ENCODE measurements at regions of chr16 and their contacts with region 1.

Region 1: DNA sequence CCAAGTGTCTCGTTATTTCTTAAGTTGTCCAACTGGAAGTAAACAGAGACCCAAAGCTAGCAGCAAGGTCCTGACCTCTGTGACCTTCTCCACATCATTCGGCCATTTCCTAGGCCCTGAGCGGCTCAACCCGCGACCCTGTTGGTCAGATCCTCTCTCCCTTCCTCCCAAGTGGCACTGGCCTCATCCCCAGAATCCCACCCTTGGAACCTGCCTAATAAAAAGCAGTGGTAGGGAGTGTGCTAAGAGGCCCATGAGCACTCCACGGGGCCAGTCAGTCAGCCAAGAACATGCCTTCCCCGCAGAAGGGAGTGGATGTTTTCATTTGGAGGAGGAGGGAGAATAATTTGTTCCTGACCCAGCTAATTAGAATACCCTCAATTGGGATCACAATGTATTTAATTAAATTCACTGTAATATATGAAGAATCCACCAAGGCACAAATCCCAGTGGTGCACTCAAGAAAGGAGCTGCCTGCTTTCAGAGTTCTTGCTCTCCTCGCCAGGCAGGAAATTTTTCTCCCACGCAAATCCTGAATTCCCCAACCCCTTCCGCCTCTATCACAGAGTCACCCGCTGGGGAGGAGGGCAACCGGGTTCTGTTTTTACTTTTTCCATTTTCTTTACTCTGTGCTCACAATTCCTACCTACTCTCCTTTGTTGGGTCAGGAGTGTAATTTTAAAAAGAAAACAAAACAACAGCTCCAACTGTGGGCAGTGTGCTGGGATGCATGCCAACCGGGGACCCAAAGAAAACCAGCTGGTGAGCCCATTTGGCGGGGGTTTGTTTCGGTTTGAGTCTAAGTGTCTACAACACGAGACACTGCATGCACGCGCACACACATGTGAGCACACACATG is 153.4 kb downstream of the ZFHX3 start:
- DNase-seq: peak; percentile 59
- ATAC-seq: peak; percentile 43

Region 2: DNA sequence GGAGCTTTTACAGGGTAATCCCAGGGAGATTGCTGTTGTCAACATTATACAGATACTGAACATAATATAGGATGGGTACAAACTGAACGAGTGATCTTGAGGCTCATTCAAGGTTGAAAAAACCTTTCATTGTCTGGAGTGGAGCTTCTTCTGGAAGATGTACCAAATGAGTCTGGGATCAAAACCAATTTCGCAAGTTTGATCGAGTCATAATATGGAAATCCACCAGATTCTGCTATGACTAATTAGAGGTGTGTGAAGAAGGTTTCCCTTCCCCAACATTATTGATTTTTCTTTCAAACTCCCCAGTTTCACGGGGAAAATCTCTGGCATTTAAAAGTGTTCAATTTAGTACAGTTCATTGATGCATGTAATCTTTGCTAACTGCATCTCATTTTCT is 170.7 kb before region 1 on chr16:
- intact Hi-C with region 1: no loop called
- DNase-seq: no peak
- ATAC-seq: no peak

Region 3: GRCh38 chr16:72787514-72788268 is 106.8 kb before region 1 on chr16:
- intact Hi-C with region 1: no loop called
- DNase-seq: peak; percentile 81
- ATAC-seq: peak; percentile 83

Region 4: DNA sequence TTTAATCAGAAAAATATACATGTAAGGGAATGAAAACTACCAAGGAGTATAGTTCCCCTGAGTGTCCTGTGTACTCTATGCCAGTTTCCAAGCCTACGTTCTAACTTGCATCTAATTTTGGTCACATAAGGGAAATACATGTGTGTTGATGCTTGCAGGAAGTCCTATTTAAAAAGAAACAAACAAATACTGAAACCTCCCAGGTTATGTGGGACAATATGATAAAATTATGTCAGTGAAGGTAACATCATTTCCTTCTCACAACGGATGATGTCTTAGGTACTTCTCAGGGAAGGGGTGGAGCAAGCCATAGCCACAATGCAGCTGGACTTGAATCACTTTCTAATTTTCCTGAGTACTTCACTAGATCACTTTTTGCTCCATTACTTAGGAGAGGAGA is 37.5 kb after region 1 on chr16:
- intact Hi-C with region 1: loop called (anchors 5 kb)
- DNase-seq: no peak
- ATAC-seq: peak; percentile 2

Region 5: DNA sequence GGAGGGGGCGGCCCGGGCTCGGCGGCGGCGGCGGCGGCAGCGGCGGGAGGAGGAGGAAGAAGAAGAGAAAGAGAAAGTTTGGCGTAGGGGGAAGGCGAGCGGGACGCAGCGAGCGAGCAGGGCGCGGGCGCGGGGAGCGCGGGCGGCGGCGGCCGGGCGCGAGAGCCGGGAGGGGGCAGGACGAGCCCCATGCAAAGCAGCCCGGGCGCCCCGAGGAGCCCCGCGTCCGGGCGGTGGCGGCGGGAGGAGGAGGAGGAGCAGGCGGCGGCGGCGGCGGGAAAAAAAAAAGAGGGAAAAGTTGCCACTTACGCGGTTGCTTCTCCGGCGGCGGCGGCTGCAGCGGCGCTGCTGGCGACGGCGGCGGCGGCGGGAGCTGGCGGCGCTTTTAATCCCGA is 163.7 kb after region 1 on chr16:
- intact Hi-C with region 1: loop called (anchors 5 kb)
- DNase-seq: no peak
- ATAC-seq: peak; percentile 24

Measured in Right ventricle myocardium inferior (tissue), 1 donor.